ENCODE measurements at regions of chrX and their contacts with region 1.

Region 1: DNA sequence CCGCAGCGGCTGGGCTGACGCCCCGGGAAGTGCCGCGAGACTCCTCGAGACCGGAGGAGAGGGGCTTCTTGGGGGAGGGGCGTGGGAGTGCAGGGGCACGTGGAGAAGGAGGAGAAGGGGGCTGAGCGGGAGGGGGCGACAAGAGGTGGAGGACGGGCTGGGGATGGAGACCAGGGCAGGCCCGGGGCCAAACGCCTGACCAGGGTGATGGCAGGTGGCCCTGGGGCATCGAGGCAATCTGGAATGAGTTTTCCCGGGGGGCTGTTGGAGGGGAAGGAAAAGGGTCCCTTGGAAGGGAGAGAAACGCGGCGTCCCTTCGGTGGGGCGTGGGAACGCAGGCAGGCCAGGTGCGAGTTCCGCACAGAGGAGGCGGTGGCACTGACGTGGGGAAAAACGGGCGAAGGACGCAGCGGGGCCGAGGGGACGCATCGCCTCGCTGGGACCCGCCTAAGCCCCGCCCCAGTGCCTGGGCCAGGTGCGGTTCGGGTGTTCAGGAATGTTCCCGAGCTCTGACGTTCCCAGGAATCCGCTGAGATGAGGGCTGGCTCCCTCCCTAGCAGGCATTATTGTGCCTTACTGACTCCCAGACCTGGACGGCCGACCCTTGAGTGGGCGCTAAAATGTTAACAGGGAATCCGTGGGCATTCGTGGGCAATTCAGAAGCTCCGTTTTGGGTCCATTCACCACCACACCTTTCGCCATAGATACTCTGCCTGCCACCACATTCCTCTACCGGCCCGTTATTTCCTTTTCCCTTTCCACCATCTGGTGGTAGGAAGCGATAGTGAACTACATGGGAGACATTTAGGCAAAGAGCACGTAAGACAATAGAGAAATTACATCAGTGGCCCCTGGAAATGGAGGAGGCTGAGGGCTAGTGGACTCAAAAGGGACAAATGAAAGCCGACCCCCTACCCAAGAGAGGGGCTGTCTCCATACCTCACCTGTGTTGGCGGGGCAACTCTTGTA is 795 bp upstream of the SH3KBP1 start:
- DNase-seq: no peak
- H3K4me3 ChIP-seq: peak overlapping the region; percentile 57 to 92
- H3K27ac ChIP-seq: peak overlapping the region; percentile 56 to 66
- H3K4me1 ChIP-seq: no peaks in the 10 kb centered on the region
- H3K27me3 ChIP-seq: no peaks in the 10 kb centered on the region
- CTCF ChIP-seq: peak; percentile 43 to 71 (median 51)

Region 2: GRCh38 chrX:19372170-19372546 is 516.0 kb before region 1 on chrX:
- intact Hi-C with region 1: loop called (anchors 10 kb)
- DNase-seq: peak in 1 of 2 donors; percentile 74
- H3K4me3 ChIP-seq: peak overlapping the region; percentile 45 to 60
- H3K27ac ChIP-seq: no peak overlapping the region
- H3K4me1 ChIP-seq: no peaks in the 10 kb centered on the region
- H3K27me3 ChIP-seq: no peaks in the 10 kb centered on the region
- CTCF ChIP-seq: peak; percentile 19 to 68 (median 40)

Region 3: GRCh38 chrX:19544693-19545305 is 343.4 kb before region 1 on chrX:
- intact Hi-C with region 1: loop called (anchors 2 kb)
- DNase-seq: no peak
- H3K4me3 ChIP-seq: no peak overlapping the region
- H3K27ac ChIP-seq: no peak overlapping the region
- H3K4me1 ChIP-seq: no peaks in the 10 kb centered on the region
- H3K27me3 ChIP-seq: no peaks in the 10 kb centered on the region
- CTCF ChIP-seq: peak; percentile 44 to 71 (median 60)

Region 4: GRCh38 chrX:19593690-19594089 is 294.5 kb before region 1 on chrX:
- intact Hi-C with region 1: loop called (anchors 1 kb)
- DNase-seq: no peak
- H3K4me3 ChIP-seq: no peak overlapping the region
- H3K27ac ChIP-seq: no peak overlapping the region
- H3K4me1 ChIP-seq: no peaks in the 10 kb centered on the region
- H3K27me3 ChIP-seq: no peaks in the 10 kb centered on the region
- CTCF ChIP-seq: peak in 1 of 3 experiments; percentile 53

Region 5: DNA sequence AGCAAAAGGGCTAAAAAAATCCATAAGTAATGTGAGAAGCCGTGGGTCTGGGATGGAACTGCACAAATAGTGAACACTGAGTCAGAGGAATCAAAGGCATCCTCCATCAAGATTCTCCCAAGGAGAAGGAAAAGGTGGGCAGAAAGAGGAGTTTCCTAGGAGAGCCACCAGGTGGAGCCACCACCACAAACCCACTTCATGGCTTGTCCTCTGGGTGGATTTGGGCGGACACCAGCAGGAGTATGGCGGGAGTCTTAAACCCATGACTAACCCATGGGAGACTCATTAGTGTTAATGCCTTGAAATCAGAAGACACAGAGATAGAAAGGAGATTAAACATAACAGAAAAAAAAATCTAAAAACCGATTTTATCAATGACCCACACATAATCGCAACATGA is 148.5 kb before region 1 on chrX:
- intact Hi-C with region 1: loop called (anchors 5 kb)
- DNase-seq: peak in 1 of 2 donors; percentile 68
- H3K4me3 ChIP-seq: no peak overlapping the region
- H3K27ac ChIP-seq: no peak overlapping the region
- H3K4me1 ChIP-seq: no peaks in the 10 kb centered on the region
- H3K27me3 ChIP-seq: no peaks in the 10 kb centered on the region
- CTCF ChIP-seq: peak; percentile 26 to 46 (median 37)

Region 6: GRCh38 chrX:19761554-19762295 is 126.5 kb before region 1 on chrX:
- intact Hi-C with region 1: no loop called
- DNase-seq: no peak
- H3K4me3 ChIP-seq: no peak overlapping the region
- H3K27ac ChIP-seq: no peak overlapping the region
- H3K4me1 ChIP-seq: no peaks in the 10 kb centered on the region
- H3K27me3 ChIP-seq: no peaks in the 10 kb centered on the region
- CTCF ChIP-seq: no peak

Region 7: DNA sequence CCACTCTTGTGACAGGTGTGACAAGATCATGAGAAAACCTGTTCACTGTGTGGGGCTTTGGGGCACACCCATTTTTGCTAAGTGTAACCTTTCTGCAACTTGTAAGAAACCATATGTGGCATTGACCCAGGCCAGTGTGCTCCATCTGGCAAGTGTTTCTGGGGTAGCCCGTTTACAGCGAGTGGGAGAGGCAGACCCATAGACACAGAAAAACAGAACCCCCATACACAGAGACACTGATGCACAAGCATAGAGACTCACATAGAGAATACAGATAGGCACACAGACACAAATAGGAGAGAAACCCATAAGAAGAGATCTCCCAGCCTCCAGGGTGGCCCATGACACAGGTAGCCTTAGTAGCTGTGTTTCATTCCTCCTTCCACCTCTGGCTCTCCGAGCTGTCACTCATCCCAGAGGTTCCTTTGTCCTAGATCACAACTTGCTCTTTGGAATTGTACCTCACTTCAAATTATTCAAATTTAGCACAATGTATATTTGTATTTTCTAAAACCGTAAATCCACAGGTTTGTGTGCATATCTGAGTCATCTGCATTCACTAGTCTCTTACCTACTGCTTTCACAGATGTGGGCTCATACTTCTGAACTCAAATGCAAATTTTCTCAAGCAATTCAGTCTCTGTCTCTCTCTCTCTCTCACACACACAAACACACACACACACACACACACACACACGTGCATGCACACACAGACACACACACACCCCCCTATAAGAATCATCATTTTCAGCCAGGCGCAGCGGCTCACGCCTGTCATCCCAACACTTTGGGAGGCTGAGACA is 115.2 kb before region 1 on chrX:
- intact Hi-C with region 1: loop called (anchors 10 kb)
- DNase-seq: no peak
- H3K4me3 ChIP-seq: no peak overlapping the region
- H3K27ac ChIP-seq: no peak overlapping the region
- H3K4me1 ChIP-seq: no peaks in the 10 kb centered on the region
- H3K27me3 ChIP-seq: no peaks in the 10 kb centered on the region
- CTCF ChIP-seq: no peak

Region 8: DNA sequence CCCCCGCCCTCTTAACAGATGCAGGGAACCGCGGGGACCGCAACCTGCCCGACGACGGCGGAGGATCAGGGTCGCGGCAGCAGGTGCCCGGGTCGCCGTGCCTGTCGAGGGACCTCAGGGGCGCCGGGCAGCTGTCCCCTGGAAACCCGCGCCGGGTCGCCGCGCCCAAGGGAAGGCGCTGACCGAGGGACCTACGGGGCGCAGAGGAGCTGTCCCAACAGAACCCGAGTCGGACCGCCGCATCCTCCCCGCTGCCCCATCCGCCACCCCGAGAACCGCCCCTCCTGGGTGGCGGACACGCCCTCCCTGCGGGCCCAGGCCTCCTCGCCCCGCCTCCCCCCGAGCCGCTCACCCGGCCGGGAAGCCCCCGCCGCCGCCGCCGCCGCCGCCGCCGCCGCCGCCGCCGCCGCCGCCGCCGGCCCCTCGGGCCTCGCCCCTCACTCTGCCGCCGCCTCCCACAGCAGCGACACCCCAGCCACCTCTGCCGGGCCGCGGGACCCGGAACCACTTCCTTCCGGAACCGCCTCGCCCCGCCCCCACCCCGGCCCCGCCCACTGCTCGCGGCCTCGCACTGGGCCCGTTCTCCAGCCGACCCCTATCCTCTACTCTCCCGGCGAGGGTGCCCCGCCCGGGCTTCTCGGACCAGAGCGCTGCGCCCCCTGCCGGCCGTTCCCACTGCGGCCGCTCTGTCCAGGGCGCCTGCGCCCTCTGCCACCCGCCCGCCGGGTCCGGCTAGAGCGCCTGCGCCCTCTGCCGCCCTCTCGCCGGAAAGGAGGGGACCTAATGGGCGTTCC is 102.6 kb after region 1 on chrX and contains the start of gene BCLAF3:
- intact Hi-C with region 1: loop called (anchors 5 kb)
- DNase-seq: peak; percentile 53 to 92
- H3K4me3 ChIP-seq: peak within 1 kb of the TSS; percentile 61 to 69
- H3K27ac ChIP-seq: peak within 1 kb of the TSS; percentile 46 to 68
- H3K4me1 ChIP-seq: no peaks in the 10 kb centered on the region
- H3K27me3 ChIP-seq: no peaks in the 10 kb centered on the region
- CTCF ChIP-seq: peak; percentile 84 to 86 (median 84)
- total RNA-seq, gene BCLAF3: 5.0 TPM

Measured in ascending aorta (tissue), 2 donors.